ENCODE measurements at regions of chr11 and their contacts with region 1.

Region 1: DNA sequence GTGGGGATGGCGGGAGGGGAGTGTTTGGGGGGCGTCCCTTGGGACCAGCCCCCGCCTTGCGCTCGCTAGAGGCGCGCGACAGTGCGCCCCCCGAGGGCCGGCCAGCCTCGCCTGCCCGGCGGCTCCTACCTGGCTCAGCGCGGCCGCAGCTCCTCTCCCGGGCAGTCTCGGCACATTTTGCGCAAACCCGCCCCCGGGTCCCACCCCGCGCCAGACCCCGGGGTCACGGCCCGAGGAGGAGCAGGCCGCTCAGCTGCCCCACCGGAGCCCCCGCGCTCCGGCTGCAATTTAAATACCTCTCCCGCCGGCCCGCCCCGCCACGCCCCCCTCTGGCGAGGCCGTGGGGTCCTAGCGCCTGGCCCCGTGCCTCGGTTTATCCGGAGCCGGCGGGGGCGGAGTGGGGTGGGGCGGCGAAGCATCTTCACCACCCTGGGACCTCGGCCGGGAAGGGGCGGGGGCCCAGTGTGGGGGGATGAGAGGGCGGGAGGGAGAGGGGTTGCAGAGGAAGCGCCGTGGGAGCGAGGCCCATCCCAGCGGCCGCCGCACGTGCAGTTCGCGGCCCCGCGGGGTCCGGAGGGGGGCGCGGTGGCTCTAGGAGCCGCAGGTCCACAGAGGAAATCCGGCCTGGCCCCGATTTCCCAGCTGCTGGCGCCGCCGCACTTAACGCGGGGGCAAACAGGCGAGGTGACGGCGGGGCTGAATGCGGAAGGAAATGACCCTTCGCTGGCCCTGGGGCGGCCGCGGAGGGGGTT is at the start of gene LRRC32:
- DNase-seq: no peak
- ATAC-seq: peak; percentile 3
- H3K4me3 ChIP-seq: peak within 1 kb of the TSS; percentile 62
- H3K27ac ChIP-seq: peak within 1 kb of the TSS; percentile 47; the same call in 1 of the 2 replicates
- H3K4me1 ChIP-seq: peaks cover 76% of the 10 kb centered on the region
- H3K27me3 ChIP-seq: peaks cover 1 to 8% of the 10 kb centered on the region in 2 experiments; a peak in 2 of 4 replicates
- CTCF ChIP-seq: peak in 1 of 3 experiments; percentile 16; a peak in 2 of 6 replicates
- EP300 ChIP-seq: no peak
- POLR2A ChIP-seq: no peak; the same call in 1 of the 2 replicates
- RAD21 ChIP-seq: no peak
- polyA plus RNA-seq, gene LRRC32: 4.3 to 7.4 TPM

Region 2: GRCh38 chr11:76235233-76236091 is 435.2 kb before region 1 on chr11:
- CTCF ChIA-PET with region 1: no interaction called
- POLR2A ChIA-PET with region 1: no interaction called
- RAD21 ChIA-PET with region 1: interaction called, 3 read pairs
- SMC1A ChIA-PET with region 1: no interaction called
- in situ Hi-C with region 1: loop called (anchors 10 kb)
- intact Hi-C with region 1: no loop called
- DNase-seq: peak; percentile 93
- ATAC-seq: peak; percentile 85
- H3K4me3 ChIP-seq: peak overlapping the region; percentile 80
- H3K27ac ChIP-seq: peak overlapping the region; percentile 73
- H3K4me1 ChIP-seq: peaks cover 34% of the 10 kb centered on the region
- H3K27me3 ChIP-seq: peaks cover 0 to 1% of the 10 kb centered on the region in 2 experiments; a peak in 1 of 4 replicates
- CTCF ChIP-seq: no peak
- EP300 ChIP-seq: peak in 1 of 2 experiments; percentile 73; a peak in 1 of 4 replicates
- POLR2A ChIP-seq: peak; percentile 77
- RAD21 ChIP-seq: no peak

Region 3: DNA sequence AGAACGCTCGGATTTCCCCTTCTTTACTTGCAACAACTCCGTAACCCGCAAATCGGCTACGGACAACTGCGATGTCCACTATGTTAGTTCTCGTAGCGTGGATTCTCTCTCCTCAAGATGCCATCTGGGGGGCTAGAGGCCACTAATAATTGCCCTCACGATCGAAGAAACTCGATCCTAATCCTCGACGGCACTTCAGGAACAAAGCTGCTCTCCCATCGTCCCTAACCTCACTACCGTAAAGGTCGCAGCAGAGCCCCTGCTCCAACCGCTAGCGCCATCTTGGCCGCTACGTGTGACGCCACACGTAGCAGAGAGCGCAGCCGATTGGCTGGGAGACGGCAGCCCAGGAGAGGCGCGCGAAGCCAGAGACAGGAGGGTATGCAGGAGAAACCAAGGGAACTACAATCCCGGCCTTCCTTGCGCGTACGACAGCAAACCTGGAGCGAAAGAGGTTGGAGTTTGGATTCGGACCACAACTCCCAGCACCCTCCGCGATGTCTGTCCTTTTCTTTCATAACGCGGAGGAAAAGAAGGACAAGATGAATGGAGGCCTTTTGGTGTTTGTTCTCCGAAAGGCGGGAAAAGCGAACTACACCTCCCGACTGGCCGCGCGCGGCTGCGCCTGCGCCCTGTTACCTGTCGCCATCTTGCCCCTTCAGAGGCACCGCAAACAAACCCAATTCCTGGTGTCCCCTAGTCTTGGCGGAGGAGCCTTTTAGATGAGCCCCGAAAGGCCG is 226.1 kb before region 1 on chr11 and contains the start of gene EMSY:
- CTCF ChIA-PET with region 1: no interaction called
- POLR2A ChIA-PET with region 1: no interaction called
- RAD21 ChIA-PET with region 1: no interaction called
- SMC1A ChIA-PET with region 1: no interaction called
- in situ Hi-C with region 1: no loop called
- intact Hi-C with region 1: loop called (anchors 2 kb)
- DNase-seq: peak; percentile 99
- ATAC-seq: peak; percentile 95
- H3K4me3 ChIP-seq: peak within 1 kb of the TSS; percentile 98
- H3K27ac ChIP-seq: peak within 1 kb of the TSS; percentile 95
- H3K4me1 ChIP-seq: no peaks in the 10 kb centered on the region; the same call in 1 of the 2 replicates
- H3K27me3 ChIP-seq: no peaks in the 10 kb centered on the region
- CTCF ChIP-seq: no peak
- EP300 ChIP-seq: no peak
- POLR2A ChIP-seq: peak; percentile 100
- RAD21 ChIP-seq: no peak
- polyA plus RNA-seq, gene EMSY: 9.3 to 9.8 TPM

Region 4: DNA sequence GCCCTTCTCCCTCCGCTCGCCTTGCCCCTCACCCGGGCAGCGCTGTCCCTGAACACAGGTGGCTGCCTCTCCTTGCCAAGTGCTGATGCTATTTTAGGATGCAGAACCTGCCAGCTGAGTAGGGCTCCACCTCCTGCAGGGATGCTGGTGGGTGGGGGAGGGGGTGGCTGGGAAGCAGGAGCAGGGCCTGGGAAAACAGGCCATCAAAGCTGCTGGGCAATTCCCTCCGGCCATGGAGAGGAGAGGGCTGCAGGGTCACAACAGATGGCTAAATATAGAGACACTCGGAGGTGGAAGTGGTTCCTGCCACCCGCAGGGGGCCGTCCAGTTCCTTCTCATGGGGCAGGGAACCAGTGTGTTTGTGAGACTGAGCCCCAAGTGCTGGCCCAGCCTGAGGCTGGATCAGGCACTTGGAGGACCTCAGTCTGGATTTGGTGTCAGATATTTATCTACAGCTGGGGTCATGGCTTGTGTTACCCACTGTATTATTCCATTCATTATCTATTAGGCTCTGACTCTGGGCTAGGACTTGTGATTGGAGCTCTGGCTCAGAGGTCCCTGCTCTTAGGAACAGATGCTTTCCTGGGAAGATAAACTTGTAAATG is 59.7 kb before region 1 on chr11:
- CTCF ChIA-PET with region 1: interaction called, 13 read pairs
- POLR2A ChIA-PET with region 1: interaction called, 7 read pairs
- RAD21 ChIA-PET with region 1: interaction called, 31 read pairs
- SMC1A ChIA-PET with region 1: interaction called, 11 read pairs
- in situ Hi-C with region 1: no loop called
- intact Hi-C with region 1: no loop called
- DNase-seq: no peak
- ATAC-seq: peak; percentile 78
- H3K4me3 ChIP-seq: no peak overlapping the region
- H3K27ac ChIP-seq: no peak overlapping the region
- H3K4me1 ChIP-seq: no peaks in the 10 kb centered on the region
- H3K27me3 ChIP-seq: no peaks in the 10 kb centered on the region
- CTCF ChIP-seq: peak in 1 of 3 experiments; percentile 48; a peak in 2 of 6 replicates
- EP300 ChIP-seq: no peak
- POLR2A ChIP-seq: no peak
- RAD21 ChIP-seq: no peak

Region 5: GRCh38 chr11:76637491-76638269 is 33.0 kb before region 1 on chr11:
- CTCF ChIA-PET with region 1: interaction called, 70 read pairs
- POLR2A ChIA-PET with region 1: interaction called, 12 read pairs
- RAD21 ChIA-PET with region 1: interaction called, 145 read pairs
- SMC1A ChIA-PET with region 1: interaction called, 11 read pairs
- in situ Hi-C with region 1: no loop called
- intact Hi-C with region 1: no loop called
- DNase-seq: peak; percentile 67
- ATAC-seq: peak; percentile 92
- H3K4me3 ChIP-seq: no peak overlapping the region
- H3K27ac ChIP-seq: peak overlapping the region; percentile 38
- H3K4me1 ChIP-seq: peaks cover 22% of the 10 kb centered on the region
- H3K27me3 ChIP-seq: no peaks in the 10 kb centered on the region; a peak in 1 of 4 replicates
- CTCF ChIP-seq: no peak
- EP300 ChIP-seq: peak in 1 of 2 experiments; percentile 73; a peak in 2 of 4 replicates
- POLR2A ChIP-seq: peak; percentile 40; the same call in 1 of the 2 replicates
- RAD21 ChIP-seq: no peak

Measured in GM12878 (cell line).